ENCODE measurements at regions of chr13 and their contacts with region 1.

Region 1: DNA sequence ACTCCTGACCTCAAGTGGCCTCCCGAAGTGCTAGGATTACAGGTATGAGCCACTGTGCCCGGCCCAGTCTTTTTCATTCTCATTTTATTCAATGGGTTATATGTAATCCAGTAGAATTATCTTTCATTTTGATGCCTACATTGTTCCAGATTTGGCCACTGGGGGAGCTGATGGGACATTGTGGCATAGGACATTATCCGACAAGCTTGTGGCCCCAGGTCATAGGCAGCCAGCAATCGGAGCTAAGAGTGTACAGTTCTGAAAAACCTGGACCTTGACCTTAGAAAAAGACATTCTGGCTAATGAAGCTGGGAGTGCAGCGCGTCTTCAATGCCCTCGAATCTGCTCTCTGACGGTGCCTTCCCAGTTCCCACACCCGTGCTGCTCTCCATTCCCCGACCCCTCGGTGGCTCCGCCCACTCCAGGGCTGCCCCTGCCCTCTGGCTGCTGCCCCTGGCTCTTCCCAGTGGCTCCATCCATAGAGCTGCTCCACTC is 108.7 kb downstream of the TEX29 start:
- DNase-seq: peak; percentile 72
- ATAC-seq: peak; percentile 98
- H3K4me3 Mint-ChIP-seq: peak overlapping the region; percentile 74
- H3K27ac Mint-ChIP-seq: no peak overlapping the region
- H3K4me1 Mint-ChIP-seq: no peaks in the 10 kb centered on the region
- H3K27me3 Mint-ChIP-seq: no peaks in the 10 kb centered on the region; the same call in 1 of the 2 replicates
- CTCF ChIP-seq: peak; percentile 32; the same call in 1 of the 2 replicates

Region 2: DNA sequence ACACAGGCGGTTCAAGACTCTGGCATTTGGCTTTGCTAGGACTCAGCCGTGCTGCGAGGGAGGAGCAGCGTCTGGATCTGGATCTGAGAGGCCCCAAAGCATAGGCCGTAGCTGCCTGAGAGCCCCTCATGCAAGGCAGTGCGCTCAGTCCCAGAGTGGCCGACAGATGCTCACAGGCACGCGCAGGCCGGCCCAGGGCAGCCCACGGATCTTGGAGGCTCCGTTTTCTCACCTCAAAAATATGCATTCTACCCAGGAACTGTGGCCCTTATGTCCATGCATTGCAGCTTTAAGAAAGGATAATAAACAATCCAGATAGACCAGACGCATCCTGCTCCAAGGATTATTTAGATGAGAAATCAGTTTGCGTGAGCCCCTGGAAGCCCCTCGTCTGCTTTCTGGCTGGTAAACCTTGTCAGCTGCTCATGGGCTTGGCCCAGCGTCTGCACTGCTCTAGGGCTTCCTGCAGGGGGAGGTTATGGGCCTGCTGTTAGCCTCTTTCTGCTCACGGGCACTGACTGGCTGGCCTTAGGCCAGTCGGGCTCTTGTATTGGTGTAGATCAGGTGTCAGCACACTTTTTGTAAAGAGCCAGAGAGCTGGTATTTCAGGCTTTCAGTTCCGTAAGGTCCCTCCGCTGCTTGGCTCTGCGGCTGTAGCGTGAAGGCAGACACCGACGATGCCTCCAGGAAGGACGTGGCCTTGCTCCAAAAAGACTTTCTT is 84.5 kb before region 1 on chr13:
- CTCF ChIA-PET with region 1: interaction called, 28 read pairs
- POLR2A ChIA-PET with region 1: no interaction called
- DNase-seq: peak; percentile 85
- ATAC-seq: peak; percentile 100
- H3K4me3 Mint-ChIP-seq: no peak overlapping the region
- H3K27ac Mint-ChIP-seq: peak overlapping the region; percentile 74
- H3K4me1 Mint-ChIP-seq: peaks cover 10% of the 10 kb centered on the region
- H3K27me3 Mint-ChIP-seq: no peaks in the 10 kb centered on the region
- CTCF ChIP-seq: peak; percentile 55

Region 3: GRCh38 chr13:111398715-111399299 is 30.3 kb before region 1 on chr13:
- CTCF ChIA-PET with region 1: interaction called, 39 read pairs
- POLR2A ChIA-PET with region 1: no interaction called
- DNase-seq: no peak
- ATAC-seq: no peak
- H3K4me3 Mint-ChIP-seq: no peak overlapping the region
- H3K27ac Mint-ChIP-seq: no peak overlapping the region
- H3K4me1 Mint-ChIP-seq: no peaks in the 10 kb centered on the region
- H3K27me3 Mint-ChIP-seq: no peaks in the 10 kb centered on the region
- CTCF ChIP-seq: no peak

Region 4: DNA sequence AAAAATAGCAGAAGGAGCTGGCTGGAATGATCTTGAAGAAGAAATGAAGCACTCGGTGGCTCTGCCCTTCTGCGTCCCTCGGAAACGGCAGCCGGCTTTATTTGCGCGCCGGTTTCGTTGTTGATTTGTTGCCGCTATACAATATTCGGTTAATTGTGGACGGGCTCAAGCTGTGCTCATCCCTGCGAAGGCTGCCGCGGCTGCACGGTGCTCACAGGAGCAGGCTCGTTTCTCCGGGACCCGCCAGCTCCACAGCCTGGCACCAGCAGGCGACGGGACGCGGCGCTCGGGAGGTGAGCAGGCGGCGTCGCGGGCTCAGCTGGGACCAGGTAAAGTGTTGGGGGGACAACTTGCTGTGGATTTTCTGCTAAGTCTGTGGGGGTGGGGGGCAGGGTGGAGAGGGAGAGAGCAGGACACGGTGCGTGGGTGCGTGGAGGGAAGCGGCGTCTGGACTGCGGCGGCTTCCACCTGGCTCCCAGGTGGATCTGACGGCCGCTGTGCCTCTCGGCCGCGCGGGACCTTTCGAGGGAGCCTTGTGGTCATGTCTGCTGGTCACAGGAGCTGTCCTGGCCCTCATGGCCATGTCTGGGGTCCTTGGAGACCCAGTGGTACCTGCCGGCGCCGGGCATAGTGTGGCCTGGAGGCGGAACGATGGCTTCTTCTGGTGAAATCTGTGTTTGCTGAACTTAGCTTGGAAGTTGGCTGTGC is 17.8 kb before region 1 on chr13:
- CTCF ChIA-PET with region 1: interaction called, 39 read pairs
- POLR2A ChIA-PET with region 1: no interaction called
- DNase-seq: no peak
- ATAC-seq: peak; percentile 34; the same call in 1 of the 2 replicates
- H3K4me3 Mint-ChIP-seq: no peak overlapping the region
- H3K27ac Mint-ChIP-seq: no peak overlapping the region
- H3K4me1 Mint-ChIP-seq: peaks cover 23% of the 10 kb centered on the region
- H3K27me3 Mint-ChIP-seq: peaks cover 19% of the 10 kb centered on the region
- CTCF ChIP-seq: no peak

Region 5: GRCh38 chr13:111460548-111461444 is 31.7 kb after region 1 on chr13:
- CTCF ChIA-PET with region 1: interaction called, 10 read pairs
- POLR2A ChIA-PET with region 1: no interaction called
- DNase-seq: peak; percentile 56
- ATAC-seq: peak; percentile 92
- H3K4me3 Mint-ChIP-seq: no peak overlapping the region
- H3K27ac Mint-ChIP-seq: no peak overlapping the region
- H3K4me1 Mint-ChIP-seq: no peaks in the 10 kb centered on the region
- H3K27me3 Mint-ChIP-seq: peaks cover 3% of the 10 kb centered on the region; the same call in 1 of the 2 replicates
- CTCF ChIP-seq: no peak

Region 6: DNA sequence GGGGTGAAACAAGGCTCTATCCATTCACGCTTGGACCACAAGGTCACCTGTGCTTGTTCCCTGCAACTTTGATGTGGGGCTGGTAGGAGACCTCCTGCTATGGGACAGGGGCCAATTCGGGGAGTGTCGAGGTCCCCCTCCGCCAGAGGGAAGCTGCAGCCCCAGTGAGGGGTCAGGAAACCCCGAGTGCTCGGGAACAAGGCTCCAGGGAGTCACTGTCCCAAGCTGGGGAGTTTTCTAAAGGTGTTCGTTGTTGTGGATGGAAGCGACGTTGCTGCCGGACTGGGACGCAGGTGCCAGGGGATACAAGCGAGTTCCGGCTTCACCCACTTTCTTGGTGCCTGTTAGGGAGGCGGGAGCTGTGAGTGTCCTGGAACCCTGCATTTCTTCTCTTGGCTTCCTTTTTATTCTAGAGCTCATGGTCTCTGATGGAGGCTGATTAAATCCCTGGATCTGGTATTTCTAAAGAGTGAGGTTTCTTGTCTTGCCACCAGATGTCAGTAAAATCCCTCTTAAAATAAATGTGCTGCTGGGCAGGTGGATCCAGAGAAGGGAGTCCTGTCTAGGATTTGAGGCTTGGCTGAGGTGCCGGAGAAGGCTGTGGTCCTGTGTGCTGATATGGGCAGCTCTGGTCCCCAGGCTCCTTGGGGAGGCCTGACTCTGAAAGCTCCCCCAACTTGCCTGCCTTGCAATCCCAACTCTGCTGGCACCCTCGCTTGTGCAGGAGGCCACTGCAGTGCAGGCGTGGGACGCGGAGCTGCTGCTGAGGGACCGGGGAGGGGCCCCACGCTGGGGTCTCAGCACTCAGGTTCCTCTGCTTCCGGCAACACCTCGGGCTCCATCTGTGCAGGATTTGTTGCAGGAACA is 45.3 kb after region 1 on chr13:
- CTCF ChIA-PET with region 1: interaction called, 17 read pairs
- POLR2A ChIA-PET with region 1: no interaction called
- DNase-seq: no peak
- ATAC-seq: peak; percentile 86
- H3K4me3 Mint-ChIP-seq: no peak overlapping the region
- H3K27ac Mint-ChIP-seq: no peak overlapping the region
- H3K4me1 Mint-ChIP-seq: no peaks in the 10 kb centered on the region
- H3K27me3 Mint-ChIP-seq: no peaks in the 10 kb centered on the region
- CTCF ChIP-seq: peak; percentile 50

Measured in WTC11 (cell line).